HEK293 (cell line): ENCODE measurements at regions of chr1 and their contacts with region 1.

Region 1: GRCh38 chr1:44213222-44214112 is at the start of gene DMAP1:
- H3K4me3 ChIP-seq: peak within 1 kb of the TSS; percentile 95
- H3K27ac ChIP-seq: no peak within 1 kb of the TSS; the same call in 1 of the 2 replicates
- H3K4me1 ChIP-seq: no peaks in the 10 kb centered on the region
- CTCF ChIP-seq: peak; percentile 71

Region 2: GRCh38 chr1:44002606-44003157 is 210.8 kb before region 1 on chr1:
- CTCF ChIA-PET with region 1: interaction called, 13 read pairs
- POLR2A ChIA-PET with region 1: no interaction called
- H3K4me3 ChIP-seq: no peak overlapping the region
- H3K27ac ChIP-seq: no peak overlapping the region
- H3K4me1 ChIP-seq: no peaks in the 10 kb centered on the region
- CTCF ChIP-seq: no peak

Region 3: DNA sequence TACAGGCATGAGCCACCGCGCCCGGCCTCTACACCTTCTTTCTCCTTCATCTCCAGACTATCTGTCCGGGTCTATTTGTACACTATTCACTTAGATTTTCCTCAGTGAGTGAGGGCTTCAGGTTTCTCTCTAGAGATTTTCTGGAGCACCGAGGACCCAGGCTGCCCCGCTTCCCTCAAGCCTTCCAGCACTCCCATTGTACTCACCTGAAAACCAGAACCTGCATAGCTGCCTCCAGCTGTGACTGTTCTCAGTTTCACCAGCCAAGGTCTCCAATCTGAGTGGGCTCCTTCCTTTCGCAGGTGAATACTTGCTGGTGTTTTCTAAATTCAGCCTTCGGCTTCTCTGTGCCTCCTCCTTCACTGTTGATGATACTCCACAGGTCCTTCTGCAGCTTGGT is 13.1 kb before region 1 on chr1:
- CTCF ChIA-PET with region 1: interaction called, 16 read pairs
- POLR2A ChIA-PET with region 1: no interaction called
- H3K4me3 ChIP-seq: no peak overlapping the region
- H3K27ac ChIP-seq: no peak overlapping the region
- H3K4me1 ChIP-seq: no peaks in the 10 kb centered on the region
- CTCF ChIP-seq: no peak

Region 4: DNA sequence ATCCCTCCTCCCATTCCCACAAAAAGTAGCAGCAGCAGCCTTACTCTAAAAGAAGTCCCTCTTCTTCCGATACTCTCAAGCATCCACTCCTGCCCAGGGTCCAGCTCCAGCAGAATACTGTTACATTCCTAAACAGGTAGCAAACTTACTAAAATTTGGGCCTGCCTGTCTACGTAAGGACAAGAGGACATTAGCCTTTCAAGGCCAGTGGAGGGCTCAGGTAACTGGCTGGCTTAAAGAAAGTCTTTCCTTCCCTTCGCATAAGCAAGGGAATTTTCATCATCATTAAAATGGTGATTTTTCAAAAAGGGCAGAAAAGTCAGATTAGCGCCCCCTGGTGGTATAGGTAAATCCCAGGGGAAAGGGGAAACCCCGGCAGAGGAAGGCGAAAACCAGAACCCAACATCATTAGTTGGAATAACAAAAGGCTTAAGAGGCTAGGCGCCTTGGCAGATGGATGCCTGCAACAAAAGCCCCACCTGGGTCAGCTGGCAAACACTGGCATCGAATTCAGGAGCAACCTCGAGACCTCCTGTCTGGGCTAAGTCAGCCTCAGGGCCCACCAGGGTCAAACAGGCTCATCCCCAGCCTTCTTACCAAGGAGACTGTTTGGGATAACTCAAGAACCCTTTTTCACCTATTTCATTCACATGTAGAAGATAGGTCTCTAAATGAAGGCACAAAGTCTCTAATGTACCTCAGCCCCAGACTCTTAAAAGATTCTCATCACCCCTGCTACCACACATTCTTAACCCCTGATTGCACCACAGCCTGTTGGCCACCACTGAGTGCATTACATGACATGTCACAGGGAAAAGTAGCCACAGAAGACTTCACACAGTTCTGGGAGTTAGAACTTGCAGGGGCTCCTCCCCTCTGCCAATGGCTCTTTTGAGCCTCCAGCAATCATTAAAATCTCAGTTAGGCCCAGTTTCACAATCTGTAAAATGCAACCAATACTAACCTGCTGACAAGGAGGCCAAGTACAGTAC is 104.9 kb after region 1 on chr1:
- CTCF ChIA-PET with region 1: interaction called, 11 read pairs
- POLR2A ChIA-PET with region 1: no interaction called
- H3K4me3 ChIP-seq: no peak overlapping the region
- H3K27ac ChIP-seq: no peak overlapping the region
- H3K4me1 ChIP-seq: no peaks in the 10 kb centered on the region
- CTCF ChIP-seq: peak; percentile 56

Region 5: GRCh38 chr1:44405041-44405797 is 191.8 kb after region 1 on chr1 and contains the start of gene RNF220:
- CTCF ChIA-PET with region 1: no interaction called
- POLR2A ChIA-PET with region 1: no interaction called
- H3K4me3 ChIP-seq: peak within 1 kb of the TSS; percentile 80
- H3K27ac ChIP-seq: peak within 1 kb of the TSS; percentile 84
- H3K4me1 ChIP-seq: no peaks in the 10 kb centered on the region
- CTCF ChIP-seq: peak; percentile 76

Region 6: GRCh38 chr1:44594871-44595746 is 381.6 kb after region 1 on chr1:
- CTCF ChIA-PET with region 1: interaction called, 16 read pairs
- POLR2A ChIA-PET with region 1: interaction called, 3 read pairs
- H3K4me3 ChIP-seq: no peak overlapping the region
- H3K27ac ChIP-seq: no peak overlapping the region
- H3K4me1 ChIP-seq: no peaks in the 10 kb centered on the region
- CTCF ChIP-seq: peak; percentile 87